Right ventricle myocardium inferior (tissue), 1 donor: ENCODE measurements at regions of chr11 and their contacts with region 1.

Region 1: GRCh38 chr11:77820563-77821348 is at the starts of genes AAMDC and RSF1:
- DNase-seq: peak; percentile 99
- ATAC-seq: peak; percentile 96
- total RNA-seq, gene AAMDC: 139 TPM
- total RNA-seq, gene RSF1: 34.8 TPM

Region 2: DNA sequence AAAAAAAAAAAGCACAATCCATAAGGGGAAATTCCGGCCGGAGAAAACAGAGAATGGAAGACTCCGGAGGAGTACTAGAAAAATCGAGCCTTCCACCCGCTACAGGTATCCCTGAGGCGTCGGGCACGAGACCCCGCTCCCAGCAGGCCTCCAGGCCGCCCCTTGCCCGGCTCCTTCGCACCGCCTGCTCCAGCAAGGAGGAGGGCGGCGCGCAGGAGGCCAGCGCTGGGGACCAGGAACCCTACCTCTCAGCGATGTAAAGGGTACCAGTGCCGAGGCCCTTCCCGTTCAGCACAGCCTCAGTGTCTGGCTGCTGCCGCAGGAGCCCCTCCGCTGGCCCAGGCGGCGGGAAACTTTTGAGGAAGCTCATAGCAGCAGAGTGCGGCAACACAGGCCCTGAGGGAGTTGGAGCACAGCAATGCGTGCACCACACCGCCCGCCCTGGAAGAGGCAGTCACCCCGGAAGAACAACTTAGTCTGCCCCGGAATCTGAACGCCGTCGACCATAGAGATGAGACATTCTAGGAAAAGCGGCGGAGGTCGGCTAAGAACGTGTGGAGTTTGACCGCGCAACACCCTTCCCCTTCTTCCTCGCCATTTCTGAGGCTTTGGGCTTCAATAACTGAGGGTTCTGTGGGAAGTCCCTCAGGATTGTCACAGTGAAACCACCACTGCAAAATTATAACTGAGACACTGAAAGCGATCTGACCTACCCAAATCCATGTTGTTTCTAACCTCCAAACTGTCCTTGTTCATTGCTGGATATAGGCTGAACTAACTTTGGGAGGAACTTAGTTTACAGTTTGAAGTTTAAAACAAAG is 183.2 kb before region 1 on chr11 and contains the start of gene CLNS1A:
- intact Hi-C with region 1: loop called (anchors 1 kb)
- DNase-seq: peak; percentile 90
- ATAC-seq: peak; percentile 98
- total RNA-seq, gene CLNS1A: 76.9 TPM

Region 3: DNA sequence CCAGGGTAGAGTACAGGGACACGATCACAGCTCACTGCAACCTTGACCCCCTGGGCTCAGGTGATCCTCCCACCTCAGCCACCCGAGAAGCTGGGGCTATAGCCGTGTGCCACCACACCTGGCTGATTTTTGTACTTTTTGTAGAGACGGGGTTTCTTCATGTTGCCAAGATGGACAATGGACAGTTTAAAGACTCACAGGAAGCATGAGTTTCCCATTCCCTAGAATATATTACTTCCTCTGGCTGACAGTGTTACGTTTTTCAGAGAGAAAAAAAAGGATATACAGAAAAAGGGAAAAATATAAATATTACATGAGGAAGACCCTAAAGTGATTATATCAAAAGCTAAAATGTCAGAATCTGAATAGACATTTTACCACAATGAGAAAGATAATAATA is 72.5 kb before region 1 on chr11:
- intact Hi-C with region 1: loop called (anchors 2 kb)
- DNase-seq: no peak
- ATAC-seq: no peak